CD8-positive, alpha-beta T cell (primary cell): ENCODE measurements at regions of chr3 and their contacts with region 1.

Region 1: GRCh38 chr3:128153156-128154041 is at the start of gene EEFSEC:
- DNase-seq: peak; percentile 77 to 92 (median 84)
- ATAC-seq: peak; percentile 90
- H3K4me3 ChIP-seq: peak within 1 kb of the TSS; percentile 61 to 74
- H3K4me3 Mint-ChIP-seq: peak within 1 kb of the TSS; percentile 87
- H3K27ac ChIP-seq: peak within 1 kb of the TSS; percentile 65 to 77
- H3K27ac Mint-ChIP-seq: peak within 1 kb of the TSS; percentile 89
- H3K4me1 ChIP-seq: peaks cover 14% of the 10 kb centered on the region
- H3K4me1 Mint-ChIP-seq: peaks cover 42% of the 10 kb centered on the region
- H3K27me3 ChIP-seq: no peaks in the 10 kb centered on the region
- H3K27me3 Mint-ChIP-seq: no peaks in the 10 kb centered on the region
- CTCF ChIP-seq: no peak
- total RNA-seq, gene EEFSEC: 10.8 to 11.6 TPM

Region 2: DNA sequence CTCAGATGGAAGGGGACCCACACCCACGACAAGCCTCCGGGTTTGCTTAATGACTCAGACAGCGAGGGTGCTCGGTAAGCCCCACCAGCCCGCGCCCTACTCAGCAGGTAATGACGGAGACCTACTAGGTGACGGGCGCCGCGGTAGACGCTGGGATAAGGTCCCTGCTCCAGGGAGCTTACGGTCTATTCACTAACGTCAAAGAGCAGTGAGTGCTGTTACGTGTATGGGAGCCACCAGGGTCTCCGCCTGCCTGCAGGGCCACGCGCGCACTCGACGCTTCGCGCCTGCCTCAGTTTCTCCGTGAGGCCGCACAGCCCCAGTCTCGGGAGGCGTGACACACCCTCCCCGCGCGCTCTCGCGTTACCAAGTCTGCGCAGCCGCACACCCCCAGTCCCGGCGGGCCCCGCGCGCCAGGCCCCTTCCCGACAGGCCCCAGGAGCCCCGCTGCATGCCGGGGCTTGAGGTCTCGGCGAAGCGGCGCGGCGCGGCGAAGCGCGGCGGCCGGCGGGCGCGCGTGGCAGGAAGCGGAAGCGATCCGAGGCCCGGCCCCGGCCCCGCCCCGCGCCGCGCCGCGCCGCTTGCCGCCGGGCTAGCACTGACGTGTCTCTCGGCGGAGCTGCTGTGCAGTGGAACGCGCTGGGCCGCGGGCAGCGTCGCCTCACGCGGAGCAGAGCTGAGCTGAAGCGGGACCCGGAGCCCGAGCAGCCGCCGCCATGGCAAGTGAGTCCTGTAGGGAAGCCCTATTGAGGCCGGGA is 101.4 kb before region 1 on chr3 and contains the start of gene SEC61A1:
- CTCF ChIA-PET with region 1: no interaction called
- POLR2A ChIA-PET with region 1: interaction called, 5 read pairs
- intact Hi-C with region 1: loop called in 1 of 2 experiments (anchors 1 kb)
- DNase-seq: peak; percentile 87 to 97 (median 95)
- ATAC-seq: peak; percentile 93
- H3K4me3 ChIP-seq: peak within 1 kb of the TSS; percentile 92 to 95
- H3K4me3 Mint-ChIP-seq: peak within 1 kb of the TSS; percentile 99
- H3K27ac ChIP-seq: peak within 1 kb of the TSS; percentile 78 to 85
- H3K27ac Mint-ChIP-seq: peak within 1 kb of the TSS; percentile 98
- H3K4me1 ChIP-seq: peaks cover 35% of the 10 kb centered on the region
- H3K4me1 Mint-ChIP-seq: peaks cover 43% of the 10 kb centered on the region
- H3K27me3 ChIP-seq: no peaks in the 10 kb centered on the region
- H3K27me3 Mint-ChIP-seq: no peaks in the 10 kb centered on the region
- CTCF ChIP-seq: no peak
- total RNA-seq, gene SEC61A1: 125 to 131 TPM

Region 3: GRCh38 chr3:128123538-128124368 is 29.6 kb before region 1 on chr3 and contains the start of gene RUVBL1:
- CTCF ChIA-PET with region 1: interaction called, 3 read pairs
- POLR2A ChIA-PET with region 1: interaction called, 21 read pairs
- intact Hi-C with region 1: loop called (anchors 1 kb)
- DNase-seq: peak; percentile 92 to 99 (median 96)
- ATAC-seq: peak; percentile 92
- H3K4me3 ChIP-seq: peak within 1 kb of the TSS; percentile 82 to 90
- H3K4me3 Mint-ChIP-seq: peak within 1 kb of the TSS; percentile 98
- H3K27ac ChIP-seq: peak within 1 kb of the TSS; percentile 86 to 96
- H3K27ac Mint-ChIP-seq: peak within 1 kb of the TSS; percentile 98
- H3K4me1 ChIP-seq: peaks cover 19% of the 10 kb centered on the region
- H3K4me1 Mint-ChIP-seq: peaks cover 27% of the 10 kb centered on the region
- H3K27me3 ChIP-seq: no peaks in the 10 kb centered on the region
- H3K27me3 Mint-ChIP-seq: no peaks in the 10 kb centered on the region
- CTCF ChIP-seq: no peak
- total RNA-seq, gene RUVBL1: 5.1 to 5.6 TPM

Region 4: GRCh38 chr3:128297401-128298138 is 144.2 kb after region 1 on chr3:
- CTCF ChIA-PET with region 1: no interaction called
- POLR2A ChIA-PET with region 1: no interaction called
- intact Hi-C with region 1: loop called in 1 of 2 experiments (anchors 2 kb)
- DNase-seq: peak in 2 of 9 experiments; percentile 8 to 47
- ATAC-seq: no peak
- H3K4me3 ChIP-seq: no peak overlapping the region
- H3K4me3 Mint-ChIP-seq: peak overlapping the region; percentile 3
- H3K27ac ChIP-seq: no peak overlapping the region
- H3K27ac Mint-ChIP-seq: no peak overlapping the region
- H3K4me1 ChIP-seq: peaks cover 50% of the 10 kb centered on the region
- H3K4me1 Mint-ChIP-seq: peaks cover 73% of the 10 kb centered on the region
- H3K27me3 ChIP-seq: no peaks in the 10 kb centered on the region
- H3K27me3 Mint-ChIP-seq: no peaks in the 10 kb centered on the region
- CTCF ChIP-seq: no peak

Region 5: GRCh38 chr3:128316481-128316891 is 163.1 kb after region 1 on chr3:
- CTCF ChIA-PET with region 1: interaction called, 4 read pairs
- POLR2A ChIA-PET with region 1: interaction called, 8 read pairs
- intact Hi-C with region 1: loop called in 1 of 2 experiments (anchors 5 kb)
- DNase-seq: peak; percentile 21 to 89 (median 70)
- ATAC-seq: peak; percentile 97
- H3K4me3 ChIP-seq: peak overlapping the region in 1 of 2 experiments; percentile 6
- H3K4me3 Mint-ChIP-seq: peak overlapping the region; percentile 36
- H3K27ac ChIP-seq: peak overlapping the region; percentile 50 to 68
- H3K27ac Mint-ChIP-seq: peak overlapping the region; percentile 87
- H3K4me1 ChIP-seq: peaks cover 86% of the 10 kb centered on the region
- H3K4me1 Mint-ChIP-seq: peaks cover 86% of the 10 kb centered on the region
- H3K27me3 ChIP-seq: no peaks in the 10 kb centered on the region
- H3K27me3 Mint-ChIP-seq: no peaks in the 10 kb centered on the region
- CTCF ChIP-seq: no peak